ENCODE measurements at regions of chr7 and their contacts with region 1.

Region 1: DNA sequence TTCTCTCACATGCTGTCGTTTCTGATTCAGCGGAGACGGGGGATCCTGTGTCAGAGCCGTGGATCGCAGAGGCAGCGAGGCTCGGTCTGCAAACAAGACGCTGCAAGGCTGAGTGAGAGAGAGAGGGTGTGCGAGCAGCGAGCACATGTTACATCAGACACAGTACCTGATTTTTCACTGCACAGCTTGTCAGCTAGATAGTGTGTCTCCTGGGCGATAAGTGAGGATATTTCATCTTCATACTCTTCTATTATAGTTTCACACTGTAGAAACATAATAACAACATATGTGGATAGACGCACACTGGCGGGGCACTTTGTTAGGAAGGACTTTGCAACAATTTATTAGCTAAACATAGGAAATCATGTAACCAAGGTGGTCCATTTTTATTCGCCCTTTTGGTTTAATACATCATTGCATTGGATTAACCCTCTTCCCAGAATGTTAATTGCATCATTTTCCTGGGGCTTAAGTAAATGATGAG is 39.5 kb downstream of the CNPY1 start:
- DNase-seq: no peak
- H3K4me3 Mint-ChIP-seq: no peak overlapping the region
- H3K27ac Mint-ChIP-seq: peak overlapping the region; percentile 14
- H3K4me1 Mint-ChIP-seq: peaks cover 18% of the 10 kb centered on the region
- H3K27me3 Mint-ChIP-seq: peaks cover 88% of the 10 kb centered on the region

Region 2: DNA sequence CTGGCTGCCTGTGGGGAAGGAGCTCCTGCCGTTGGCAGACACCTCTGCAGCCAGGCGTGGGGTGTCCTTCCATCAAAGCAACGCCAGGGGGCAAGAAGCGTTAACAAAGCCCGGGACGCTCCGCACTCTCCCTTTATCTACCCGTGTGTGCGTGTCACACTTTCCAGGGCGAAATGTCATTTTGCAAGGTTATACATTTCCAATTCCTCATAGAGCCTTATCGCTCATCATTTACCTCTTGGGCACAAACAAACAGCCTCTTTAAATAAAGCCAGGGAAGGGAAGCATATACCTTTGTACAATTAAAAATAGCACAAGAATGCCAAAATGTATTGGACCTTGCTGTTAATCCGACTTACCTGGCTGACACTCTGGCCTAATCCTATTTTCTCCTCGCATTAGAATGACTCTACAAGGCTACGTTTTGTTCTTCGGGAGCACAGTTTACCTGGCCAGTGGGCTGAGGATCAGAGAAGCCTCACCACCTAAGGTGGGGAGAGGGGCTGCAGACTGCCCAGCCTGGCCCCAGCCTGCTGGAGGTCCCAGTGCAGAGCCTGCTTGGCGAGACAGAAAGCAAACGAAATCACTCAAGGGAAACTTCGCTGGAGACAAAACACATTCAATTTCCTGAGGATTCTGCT is 126.6 kb before region 1 on chr7:
- intact Hi-C with region 1: loop called (anchors 2 kb)
- DNase-seq: peak; percentile 47
- H3K4me3 Mint-ChIP-seq: no peak overlapping the region
- H3K27ac Mint-ChIP-seq: peak overlapping the region; percentile 2
- H3K4me1 Mint-ChIP-seq: peaks cover 27% of the 10 kb centered on the region
- H3K27me3 Mint-ChIP-seq: peaks cover 69% of the 10 kb centered on the region

Region 3: GRCh38 chr7:155398944-155399343 is 108.0 kb before region 1 on chr7:
- intact Hi-C with region 1: no loop called
- DNase-seq: no peak
- H3K4me3 Mint-ChIP-seq: no peak overlapping the region
- H3K27ac Mint-ChIP-seq: no peak overlapping the region
- H3K4me1 Mint-ChIP-seq: no peaks in the 10 kb centered on the region
- H3K27me3 Mint-ChIP-seq: peaks cover 4% of the 10 kb centered on the region

Region 4: GRCh38 chr7:155456738-155457564 is 49.9 kb before region 1 on chr7:
- intact Hi-C with region 1: loop called (anchors 1 kb)
- DNase-seq: no peak
- H3K4me3 Mint-ChIP-seq: peak overlapping the region; percentile 5
- H3K27ac Mint-ChIP-seq: peak overlapping the region; percentile 70
- H3K4me1 Mint-ChIP-seq: peaks cover 4% of the 10 kb centered on the region
- H3K27me3 Mint-ChIP-seq: peaks cover 68% of the 10 kb centered on the region

Region 5: GRCh38 chr7:155466814-155467733 is 39.8 kb before region 1 on chr7:
- intact Hi-C with region 1: loop called (anchors 1 kb)
- DNase-seq: peak; percentile 6
- H3K4me3 Mint-ChIP-seq: no peak overlapping the region
- H3K27ac Mint-ChIP-seq: peak overlapping the region; percentile 44
- H3K4me1 Mint-ChIP-seq: no peaks in the 10 kb centered on the region
- H3K27me3 Mint-ChIP-seq: peaks cover 87% of the 10 kb centered on the region

Region 6: DNA sequence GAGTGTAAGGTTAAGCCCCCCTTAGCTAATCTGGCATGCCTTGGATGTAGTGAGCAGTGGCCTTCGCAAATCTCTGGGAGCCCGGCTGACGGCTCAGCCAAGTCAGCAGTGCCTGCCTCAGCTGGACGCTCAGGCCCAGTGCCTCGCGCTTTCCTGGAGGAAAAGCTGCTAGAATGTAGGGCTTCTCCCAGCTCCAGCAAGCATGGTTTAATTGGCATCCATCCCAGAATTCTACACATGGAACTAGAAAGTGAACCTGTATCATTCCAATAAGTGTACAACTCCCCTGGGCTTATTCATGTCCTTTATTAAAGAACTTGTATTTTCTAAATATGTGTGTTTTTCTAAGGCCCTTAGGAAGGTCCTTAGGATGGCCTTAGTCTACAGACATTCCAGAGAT is 593.2 kb after region 1 on chr7:
- intact Hi-C with region 1: no loop called
- DNase-seq: no peak
- H3K4me3 Mint-ChIP-seq: no peak overlapping the region
- H3K27ac Mint-ChIP-seq: no peak overlapping the region
- H3K4me1 Mint-ChIP-seq: no peaks in the 10 kb centered on the region
- H3K27me3 Mint-ChIP-seq: peaks cover 2% of the 10 kb centered on the region

Region 7: DNA sequence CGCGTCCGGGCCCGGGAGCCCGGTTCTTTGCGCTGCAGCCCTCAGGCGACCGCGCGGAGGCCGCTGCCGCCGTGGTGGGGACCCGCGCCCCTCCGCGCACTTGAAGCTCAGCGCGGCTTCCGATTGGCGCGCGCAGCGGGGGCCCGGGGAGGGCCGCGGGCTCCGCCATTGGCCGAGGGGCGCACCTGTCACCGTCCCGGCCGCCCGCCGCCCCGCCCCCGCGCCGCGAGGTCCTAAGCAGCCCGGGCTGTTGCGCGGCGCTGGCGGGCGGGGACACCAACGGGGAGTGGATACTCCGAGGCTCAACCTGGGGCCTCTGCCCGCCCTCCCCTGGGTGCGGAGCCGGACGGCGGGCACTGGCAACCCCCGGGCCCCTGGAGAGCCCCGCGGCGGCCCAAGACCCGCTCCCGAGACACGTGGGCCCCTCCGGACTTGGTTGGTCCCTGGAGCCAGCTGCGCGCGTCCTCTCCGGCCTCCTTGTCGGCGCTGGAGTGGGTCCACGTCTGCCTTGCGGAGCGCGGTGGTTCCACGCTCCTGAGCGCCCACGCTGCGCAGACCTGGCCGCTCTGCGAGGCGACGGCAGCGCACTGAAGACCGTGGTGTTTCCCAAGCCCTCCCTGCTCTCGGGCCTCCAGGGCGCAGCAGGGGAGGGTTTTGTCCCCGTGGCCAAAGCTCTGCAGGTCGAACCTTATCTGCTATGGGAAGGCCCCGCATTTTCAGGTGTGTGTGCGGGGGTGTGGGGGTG is 1503.9 kb after region 1 on chr7 and contains the start of gene MNX1:
- intact Hi-C with region 1: loop called (anchors 2 kb)
- DNase-seq: peak; percentile 30
- H3K4me3 Mint-ChIP-seq: peak within 1 kb of the TSS; percentile 37
- H3K27ac Mint-ChIP-seq: peak within 1 kb of the TSS; percentile 51
- H3K4me1 Mint-ChIP-seq: peaks cover under 1% of the 10 kb centered on the region
- H3K27me3 Mint-ChIP-seq: peaks cover 79% of the 10 kb centered on the region
- total RNA-seq, gene MNX1: not detected in 2 replicates